Activated B cell treated with CpG ODN at 0.5 μM for 24 hours (primary cell): ENCODE measurements at regions of chr9 and their contacts with region 1.

Region 1: GRCh38 chr9:136849038-136849959 is at the start of gene PHPT1:
- DNase-seq: peak; percentile 94
- ATAC-seq: peak; percentile 94
- H3K4me3 Mint-ChIP-seq: peak within 1 kb of the TSS; percentile 95
- H3K27ac Mint-ChIP-seq: peak within 1 kb of the TSS; percentile 93
- H3K4me1 Mint-ChIP-seq: peaks cover 27% of the 10 kb centered on the region
- H3K27me3 Mint-ChIP-seq: peaks cover 6% of the 10 kb centered on the region
- CTCF ChIP-seq: no peak
- total RNA-seq, gene PHPT1: 58.8 and 64.6 TPM in 2 replicates

Region 2: GRCh38 chr9:136865735-136866103 is 16.4 kb after region 1 on chr9:
- CTCF ChIA-PET with region 1: no interaction called
- POLR2A ChIA-PET with region 1: interaction called, 4 read pairs
- intact Hi-C with region 1: loop called (anchors 1 kb)
- DNase-seq: no peak
- ATAC-seq: no peak
- H3K4me3 Mint-ChIP-seq: peak overlapping the region; percentile 89
- H3K27ac Mint-ChIP-seq: peak overlapping the region; percentile 78
- H3K4me1 Mint-ChIP-seq: peaks cover 15% of the 10 kb centered on the region
- H3K27me3 Mint-ChIP-seq: no peaks in the 10 kb centered on the region
- CTCF ChIP-seq: no peak

Region 3: DNA sequence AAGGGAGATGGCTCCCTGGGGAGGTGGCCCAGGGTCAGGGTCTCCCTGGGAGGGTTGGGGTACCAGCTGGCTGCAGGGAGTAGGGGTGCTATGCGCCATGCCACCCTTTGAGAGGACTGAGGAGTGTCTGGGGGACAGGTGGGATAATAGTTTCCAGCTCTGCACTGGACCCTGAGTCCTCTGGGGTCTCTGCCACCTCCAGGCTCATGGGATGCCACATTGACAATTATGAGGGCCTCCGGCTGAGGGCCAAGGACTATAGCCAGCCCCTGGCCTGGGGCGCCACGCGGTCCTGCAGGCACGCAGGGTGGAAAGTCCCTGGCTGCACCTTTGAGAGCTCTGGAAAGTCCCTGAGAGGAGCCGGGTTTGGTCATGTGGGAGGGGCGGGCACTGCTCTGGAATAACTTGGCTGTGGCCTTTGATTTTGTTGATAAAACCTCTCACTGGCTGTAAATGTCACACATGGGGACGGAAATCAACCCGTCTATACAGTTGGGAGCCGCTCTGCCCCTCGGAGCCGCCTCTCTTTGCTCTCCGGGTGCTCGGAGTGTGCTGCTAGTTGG is 53.0 kb after region 1 on chr9:
- CTCF ChIA-PET with region 1: interaction called, 3 read pairs
- POLR2A ChIA-PET with region 1: interaction called, 13 read pairs
- intact Hi-C with region 1: loop called (anchors 1 kb)
- DNase-seq: peak; percentile 69
- ATAC-seq: peak; percentile 85
- H3K4me3 Mint-ChIP-seq: peak overlapping the region; percentile 72
- H3K27ac Mint-ChIP-seq: peak overlapping the region; percentile 95
- H3K4me1 Mint-ChIP-seq: peaks cover 63% of the 10 kb centered on the region
- H3K27me3 Mint-ChIP-seq: no peaks in the 10 kb centered on the region
- CTCF ChIP-seq: no peak

Region 4: GRCh38 chr9:137034863-137035761 is 185.8 kb after region 1 on chr9:
- CTCF ChIA-PET with region 1: interaction called, 21 read pairs
- POLR2A ChIA-PET with region 1: interaction called, 4 read pairs
- intact Hi-C with region 1: no loop called
- DNase-seq: peak; percentile 82
- ATAC-seq: peak; percentile 65
- H3K4me3 Mint-ChIP-seq: peak overlapping the region; percentile 67
- H3K27ac Mint-ChIP-seq: peak overlapping the region; percentile 75
- H3K4me1 Mint-ChIP-seq: peaks cover 47% of the 10 kb centered on the region
- H3K27me3 Mint-ChIP-seq: no peaks in the 10 kb centered on the region
- CTCF ChIP-seq: no peak

Region 5: DNA sequence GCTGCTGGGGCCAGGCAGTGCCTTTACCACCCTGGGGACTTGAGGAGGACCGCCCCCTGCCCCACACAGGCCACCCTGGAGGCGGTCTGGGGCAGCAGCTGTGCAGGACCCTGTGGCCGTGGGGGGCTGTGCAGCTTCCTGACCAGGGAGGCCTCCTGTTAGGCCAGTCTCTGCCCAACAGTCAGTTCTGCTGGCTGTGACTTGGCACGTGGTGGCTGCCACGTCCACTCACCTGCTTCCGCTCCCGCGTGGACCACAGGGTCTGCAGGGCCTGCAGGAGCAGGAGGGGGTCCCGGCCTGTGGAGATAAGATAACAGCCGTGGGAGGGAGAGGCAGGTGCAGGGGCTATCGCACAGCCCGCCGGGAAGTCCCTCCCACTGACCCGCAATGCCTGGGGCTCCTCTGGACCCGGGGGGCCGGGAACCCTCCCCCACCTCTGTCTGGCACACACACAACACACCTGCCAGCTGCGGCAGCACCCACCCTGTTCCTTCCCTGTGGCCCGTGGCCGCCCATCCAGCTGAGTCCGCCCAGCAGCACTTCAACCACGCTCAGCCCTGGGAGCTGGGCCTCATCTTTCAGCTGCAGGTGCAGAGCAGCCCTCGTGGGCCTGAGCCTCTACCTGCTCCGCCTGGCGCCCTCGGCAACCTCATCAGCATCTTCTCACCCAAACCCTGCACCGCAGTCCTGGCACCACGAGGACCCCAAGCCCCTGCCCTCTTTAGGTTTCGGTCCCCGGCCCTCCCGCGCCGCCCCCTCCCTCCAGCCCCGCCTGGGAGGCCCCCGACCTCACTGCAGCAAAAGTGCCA is 534.0 kb after region 1 on chr9:
- CTCF ChIA-PET with region 1: no interaction called
- POLR2A ChIA-PET with region 1: no interaction called
- intact Hi-C with region 1: no loop called
- DNase-seq: no peak
- ATAC-seq: no peak
- H3K4me3 Mint-ChIP-seq: no peak overlapping the region
- H3K27ac Mint-ChIP-seq: no peak overlapping the region
- H3K4me1 Mint-ChIP-seq: no peaks in the 10 kb centered on the region
- H3K27me3 Mint-ChIP-seq: no peaks in the 10 kb centered on the region
- CTCF ChIP-seq: no peak